ENCODE measurements at regions of chr3 and their contacts with region 1.

Region 1: DNA sequence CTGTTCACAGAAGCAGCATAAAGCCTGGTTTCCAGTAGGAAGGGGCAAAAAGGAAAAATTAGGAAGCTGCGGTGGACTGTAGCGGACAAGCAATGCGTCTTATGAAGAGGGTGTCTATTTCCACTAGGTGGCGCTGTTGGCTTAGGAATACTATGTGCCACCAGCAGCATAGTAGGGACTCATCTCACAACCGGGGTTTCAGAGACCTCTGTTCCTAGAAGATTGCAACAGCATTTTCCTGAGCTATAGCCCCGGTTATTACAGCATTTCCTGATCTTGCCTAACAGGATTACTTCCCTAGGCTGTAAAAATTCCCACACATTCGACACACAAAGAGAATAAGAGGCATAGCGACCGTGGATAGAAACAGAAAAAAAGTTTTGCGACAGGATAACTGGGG is 683.0 kb downstream of the TBL1XR1 start:
- DNase-seq: no peak
- ATAC-seq: peak; percentile 80
- H3K4me3 ChIP-seq: no peak overlapping the region
- H3K27ac ChIP-seq: no peak overlapping the region
- H3K4me1 ChIP-seq: no peaks in the 10 kb centered on the region
- H3K27me3 ChIP-seq: no peaks in the 10 kb centered on the region
- CTCF ChIP-seq: peak; percentile 34 to 41 (median 39); a peak in 4 of 6 replicates
- EP300 ChIP-seq: no peak
- POLR2A ChIP-seq: no peak
- RAD21 ChIP-seq: peak; percentile 39; the same call in 1 of the 2 replicates

Region 2: GRCh38 chr3:176663837-176664831 is 149.8 kb after region 1 on chr3:
- CTCF ChIA-PET with region 1: interaction called, 6 read pairs
- POLR2A ChIA-PET with region 1: no interaction called
- RAD21 ChIA-PET with region 1: interaction called, 4 read pairs
- SMC1A ChIA-PET with region 1: no interaction called
- in situ Hi-C with region 1: no loop called
- intact Hi-C with region 1: loop called (anchors 5 kb)
- DNase-seq: no peak
- ATAC-seq: peak; percentile 38; the same call in 1 of the 3 replicates
- H3K4me3 ChIP-seq: no peak overlapping the region
- H3K27ac ChIP-seq: no peak overlapping the region
- H3K4me1 ChIP-seq: no peaks in the 10 kb centered on the region
- H3K27me3 ChIP-seq: no peaks in the 10 kb centered on the region
- CTCF ChIP-seq: peak in 1 of 3 experiments; percentile 42; a peak in 2 of 6 replicates
- EP300 ChIP-seq: no peak
- POLR2A ChIP-seq: no peak
- RAD21 ChIP-seq: 0 out of 2 replicates have a peak, but pooled peaks have one; percentile 18

Region 3: GRCh38 chr3:176939022-176939817 is 424.9 kb after region 1 on chr3:
- CTCF ChIA-PET with region 1: interaction called, 9 read pairs
- POLR2A ChIA-PET with region 1: no interaction called
- RAD21 ChIA-PET with region 1: interaction called, 8 read pairs
- SMC1A ChIA-PET with region 1: no interaction called
- in situ Hi-C with region 1: no loop called
- intact Hi-C with region 1: loop called (anchors 1 kb)
- DNase-seq: peak; percentile 5
- ATAC-seq: peak; percentile 96
- H3K4me3 ChIP-seq: no peak overlapping the region
- H3K27ac ChIP-seq: no peak overlapping the region
- H3K4me1 ChIP-seq: no peaks in the 10 kb centered on the region
- H3K27me3 ChIP-seq: 0 out of 4 replicates have a peak, but pooled peaks cover 0 to 1% of the 10 kb centered on the region in 2 experiments
- CTCF ChIP-seq: peak; percentile 73 to 82 (median 81)
- EP300 ChIP-seq: no peak
- POLR2A ChIP-seq: no peak
- RAD21 ChIP-seq: peak; percentile 83

Region 4: GRCh38 chr3:178385280-178385952 is 1871.1 kb after region 1 on chr3:
- CTCF ChIA-PET with region 1: no interaction called
- POLR2A ChIA-PET with region 1: no interaction called
- RAD21 ChIA-PET with region 1: no interaction called
- SMC1A ChIA-PET with region 1: no interaction called
- in situ Hi-C with region 1: no loop called
- intact Hi-C with region 1: loop called (anchors 2 kb)
- DNase-seq: no peak
- ATAC-seq: peak; percentile 64
- H3K4me3 ChIP-seq: no peak overlapping the region
- H3K27ac ChIP-seq: no peak overlapping the region
- H3K4me1 ChIP-seq: no peaks in the 10 kb centered on the region
- H3K27me3 ChIP-seq: no peaks in the 10 kb centered on the region
- CTCF ChIP-seq: peak; percentile 52 to 73 (median 58); a peak in 5 of 6 replicates
- EP300 ChIP-seq: no peak
- POLR2A ChIP-seq: no peak
- RAD21 ChIP-seq: peak; percentile 89

Measured in GM12878 (cell line).